Calu3 (cell line): ENCODE measurements at regions of chrX and their contacts with region 1.

Region 1: GRCh38 chrX:39550795-39551361 is 546.9 kb downstream of the BCOR start:
- DNase-seq: no peak
- H3K4me3 Mint-ChIP-seq: no peak overlapping the region
- H3K27ac Mint-ChIP-seq: no peak overlapping the region
- H3K4me1 Mint-ChIP-seq: no peaks in the 10 kb centered on the region
- H3K27me3 Mint-ChIP-seq: peaks cover 41% of the 10 kb centered on the region
- CTCF ChIP-seq: no peak

Region 2: GRCh38 chrX:39645178-39645895 is 94.5 kb after region 1 on chrX:
- CTCF ChIA-PET with region 1: interaction called, 11 read pairs
- intact Hi-C with region 1: no loop called
- DNase-seq: no peak
- H3K4me3 Mint-ChIP-seq: no peak overlapping the region
- H3K27ac Mint-ChIP-seq: no peak overlapping the region
- H3K4me1 Mint-ChIP-seq: peaks cover 11% of the 10 kb centered on the region
- H3K27me3 Mint-ChIP-seq: peaks cover 34% of the 10 kb centered on the region
- CTCF ChIP-seq: no peak